ENCODE measurements at regions of chr10 and their contacts with region 1.

Region 1: DNA sequence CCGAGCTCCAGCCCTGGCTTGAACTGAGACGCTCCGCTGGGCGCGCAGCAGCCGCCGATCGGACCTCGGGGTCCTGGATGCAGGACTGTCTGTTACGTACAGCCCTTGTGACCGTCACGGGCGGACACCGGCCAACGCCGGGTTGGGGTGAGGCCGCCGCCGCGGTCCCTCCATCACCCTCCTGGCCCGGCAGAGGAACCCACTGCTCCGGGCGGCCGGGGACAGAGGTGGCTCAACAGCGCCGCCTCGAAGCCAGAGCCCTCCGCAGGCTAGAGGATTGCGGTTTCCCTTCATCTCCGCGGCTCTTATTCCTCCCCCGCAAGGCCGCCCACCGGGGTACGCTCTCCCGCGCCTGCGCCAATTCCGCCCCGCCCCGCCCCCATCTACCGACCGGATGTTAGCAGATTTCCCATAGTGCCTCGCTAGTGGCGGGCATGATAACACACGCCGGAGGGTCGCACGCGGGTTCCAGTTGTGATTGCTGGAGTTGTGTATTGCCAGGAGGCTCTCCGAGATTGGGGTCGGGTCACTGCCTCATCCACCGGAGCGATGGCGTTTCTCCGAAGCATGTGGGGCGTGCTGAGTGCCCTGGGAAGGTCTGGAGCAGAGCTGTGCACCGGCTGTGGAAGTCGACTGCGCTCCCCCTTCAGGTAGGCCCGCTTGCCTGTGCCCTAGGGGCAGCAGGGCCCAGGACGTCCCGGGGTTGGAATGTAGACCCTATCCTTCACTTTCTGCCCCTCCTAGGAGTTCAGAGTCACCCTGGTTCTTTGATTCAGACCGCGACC is at the start of gene TFAM:
- DNase-seq: peak; percentile 86 to 99 (median 95)
- ATAC-seq: peak; percentile 85 to 93 (median 91)
- H3K4me3 ChIP-seq: peak within 1 kb of the TSS; percentile 77 to 96
- H3K4me3 Mint-ChIP-seq: peak within 1 kb of the TSS; percentile 97 to 98 (median 98)
- H3K27ac ChIP-seq: peak within 1 kb of the TSS; percentile 81
- H3K27ac Mint-ChIP-seq: peak within 1 kb of the TSS; percentile 93 to 95
- H3K4me1 ChIP-seq: peaks cover 21 to 32% of the 10 kb centered on the region in 2 experiments
- H3K4me1 Mint-ChIP-seq: peaks cover 56 to 60% (median 58%) of the 10 kb centered on the region in 3 donors
- H3K27me3 ChIP-seq: no peaks in the 10 kb centered on the region
- H3K27me3 Mint-ChIP-seq: no peaks in the 10 kb centered on the region
- total RNA-seq, gene TFAM: 35.9 to 41.8 (median 39.2) TPM

Region 2: GRCh38 chr10:58299580-58299979 is 85.6 kb before region 1 on chr10:
- CTCF ChIA-PET with region 1: interaction called, 17 to 24 read pairs
- POLR2A ChIA-PET with region 1: no interaction called
- DNase-seq: peak in 33 of 35 experiments; percentile 12 to 80 (median 46)
- ATAC-seq: peak; percentile 65 to 87 (median 72)
- H3K4me3 ChIP-seq: no peak overlapping the region
- H3K4me3 Mint-ChIP-seq: no peak overlapping the region
- H3K27ac ChIP-seq: no peak overlapping the region
- H3K27ac Mint-ChIP-seq: no peak overlapping the region
- H3K4me1 ChIP-seq: peaks cover 0 to 2% of the 10 kb centered on the region in 2 experiments
- H3K4me1 Mint-ChIP-seq: peaks cover 0 to 4% (median 3%) of the 10 kb centered on the region in 3 donors
- H3K27me3 ChIP-seq: no peaks in the 10 kb centered on the region
- H3K27me3 Mint-ChIP-seq: peaks cover 3 to 14% of the 10 kb centered on the region in 2 donors

Region 3: GRCh38 chr10:58326967-58327381 is 58.2 kb before region 1 on chr10:
- CTCF ChIA-PET with region 1: interaction called in 1 of 2 experiments, 10 read pairs
- POLR2A ChIA-PET with region 1: no interaction called
- DNase-seq: no peak
- ATAC-seq: no peak
- H3K4me3 ChIP-seq: no peak overlapping the region
- H3K4me3 Mint-ChIP-seq: no peak overlapping the region
- H3K27ac ChIP-seq: no peak overlapping the region
- H3K27ac Mint-ChIP-seq: no peak overlapping the region
- H3K4me1 ChIP-seq: peaks cover 0 to 4% of the 10 kb centered on the region in 2 experiments
- H3K4me1 Mint-ChIP-seq: peaks cover 12 to 13% (median 12%) of the 10 kb centered on the region in 3 donors
- H3K27me3 ChIP-seq: peaks cover 0 to 5% of the 10 kb centered on the region in 2 experiments
- H3K27me3 Mint-ChIP-seq: peaks cover 7 to 15% of the 10 kb centered on the region in 2 donors

Region 4: DNA sequence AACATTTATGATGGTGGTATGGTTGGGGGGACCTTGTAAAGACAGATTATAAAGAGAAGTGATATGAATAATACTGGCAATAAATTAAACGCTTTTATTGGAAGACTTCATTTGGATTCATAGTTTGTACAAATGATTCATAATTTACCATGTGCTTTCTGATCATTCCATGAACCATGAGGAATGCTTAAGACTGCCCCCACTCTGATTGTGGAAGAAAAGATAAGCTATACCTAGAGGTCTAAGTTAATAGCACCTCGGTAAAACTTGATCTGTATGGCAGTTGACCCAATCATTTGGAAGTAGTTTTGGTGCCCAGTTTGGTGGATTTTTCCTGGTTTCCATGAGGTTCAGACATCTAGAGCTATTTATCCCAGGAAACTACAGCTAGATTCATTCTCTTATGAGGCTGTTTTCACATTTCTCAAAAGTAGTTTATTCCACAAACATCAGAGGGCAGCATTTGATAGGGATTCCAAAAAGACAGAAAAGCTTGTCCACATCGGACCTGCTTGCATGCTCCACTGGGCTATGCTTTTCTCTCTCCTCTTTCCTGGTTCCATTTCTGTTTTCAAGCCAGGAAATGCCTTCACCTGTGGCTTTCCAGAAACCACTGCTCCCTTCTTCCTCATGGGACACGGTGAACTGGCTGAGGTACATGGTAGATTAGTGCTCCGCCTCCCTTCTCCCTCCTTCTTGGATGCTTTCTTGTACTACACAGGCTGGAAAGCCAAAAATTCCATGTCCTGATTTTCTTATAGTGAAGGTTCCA is 29.3 kb after region 1 on chr10:
- CTCF ChIA-PET with region 1: no interaction called
- POLR2A ChIA-PET with region 1: no interaction called
- DNase-seq: no peak
- ATAC-seq: no peak
- H3K4me3 ChIP-seq: no peak overlapping the region
- H3K4me3 Mint-ChIP-seq: no peak overlapping the region
- H3K27ac ChIP-seq: no peak overlapping the region
- H3K27ac Mint-ChIP-seq: no peak overlapping the region
- H3K4me1 ChIP-seq: no peaks in the 10 kb centered on the region
- H3K4me1 Mint-ChIP-seq: no peaks in the 10 kb centered on the region
- H3K27me3 ChIP-seq: no peaks in the 10 kb centered on the region
- H3K27me3 Mint-ChIP-seq: peaks cover 9 to 13% of the 10 kb centered on the region in 2 donors